ENCODE measurements at regions of chr14 and their contacts with region 1.

Region 1: DNA sequence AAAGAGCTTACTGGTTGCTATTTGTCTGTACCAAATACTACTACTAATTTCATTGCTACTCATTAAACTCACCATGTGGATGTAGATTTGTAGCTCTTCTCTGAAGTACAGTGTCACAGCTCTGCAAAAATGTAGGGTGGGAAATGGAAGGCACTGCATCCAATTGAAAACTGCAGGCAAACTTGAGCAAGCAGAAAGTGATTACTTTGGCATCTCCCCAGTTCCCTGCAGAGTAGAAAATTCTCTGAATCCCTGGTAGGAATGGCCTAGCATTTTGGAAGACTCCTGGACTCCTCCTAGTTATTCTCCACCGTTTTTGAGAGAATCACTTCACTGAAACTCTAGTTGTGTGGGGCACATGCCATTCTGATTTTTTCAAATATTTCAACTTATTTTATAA is 239.1 kb downstream of the DIO2 start:
- DNase-seq: no peak
- H3K4me3 Mint-ChIP-seq: no peak overlapping the region
- H3K27ac Mint-ChIP-seq: no peak overlapping the region
- H3K4me1 Mint-ChIP-seq: no peaks in the 10 kb centered on the region
- H3K27me3 Mint-ChIP-seq: no peaks in the 10 kb centered on the region

Region 2: DNA sequence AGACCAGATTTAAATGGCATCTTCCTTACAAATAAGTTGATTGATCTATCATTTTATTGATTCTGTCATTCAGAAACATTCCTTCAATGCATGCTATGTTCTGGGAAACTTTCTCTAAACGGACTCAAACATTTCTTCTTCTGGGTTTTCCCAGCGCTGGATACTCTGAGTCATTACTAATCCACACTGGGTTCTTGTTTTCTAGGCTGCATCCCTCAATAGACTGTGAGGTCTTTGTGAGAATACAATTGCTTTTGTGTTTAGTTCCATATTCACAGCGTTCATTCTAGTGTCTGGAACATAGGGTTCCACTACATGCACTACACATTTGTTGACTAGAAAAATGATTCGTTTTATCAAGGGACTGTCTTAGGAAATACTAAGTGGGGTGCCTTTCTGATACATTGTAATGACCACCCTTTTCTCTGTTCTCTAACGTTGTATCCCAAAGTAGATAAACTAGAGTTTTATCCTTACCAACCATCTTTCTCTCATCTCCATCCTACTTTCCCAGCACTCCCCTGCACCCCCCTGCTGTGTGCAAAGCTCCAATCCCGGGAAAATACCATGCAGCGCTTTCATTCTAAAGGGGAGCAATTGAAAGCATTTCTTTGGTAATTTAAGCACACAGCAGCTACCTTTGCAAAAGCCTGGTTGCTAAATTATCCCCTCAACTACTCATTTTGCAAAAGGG is 639.6 kb before region 1 on chr14:
- CTCF ChIA-PET with region 1: no interaction called
- POLR2A ChIA-PET with region 1: no interaction called
- DNase-seq: no peak
- H3K4me3 Mint-ChIP-seq: no peak overlapping the region
- H3K27ac Mint-ChIP-seq: no peak overlapping the region
- H3K4me1 Mint-ChIP-seq: no peaks in the 10 kb centered on the region
- H3K27me3 Mint-ChIP-seq: no peaks in the 10 kb centered on the region

Region 3: DNA sequence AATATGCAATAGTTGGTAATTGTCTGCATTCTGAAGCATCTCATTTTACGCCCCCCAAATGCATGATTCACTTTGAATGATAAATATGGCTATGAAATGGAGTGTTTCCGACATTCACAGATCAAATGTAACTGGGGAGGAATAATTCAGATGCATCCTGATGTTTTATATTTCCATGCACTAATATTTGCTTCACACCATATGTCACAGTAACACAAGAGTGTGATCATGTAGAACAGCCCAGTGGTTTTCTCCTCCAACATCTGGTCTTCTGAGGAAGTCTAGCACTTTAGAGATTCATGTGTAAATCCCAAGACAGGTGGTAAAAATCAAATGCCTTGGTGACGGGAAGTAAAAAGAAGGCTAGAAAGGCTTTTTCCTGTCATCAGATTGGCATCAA is 34.0 kb before region 1 on chr14:
- CTCF ChIA-PET with region 1: no interaction called
- POLR2A ChIA-PET with region 1: no interaction called
- DNase-seq: no peak
- H3K4me3 Mint-ChIP-seq: no peak overlapping the region
- H3K27ac Mint-ChIP-seq: no peak overlapping the region
- H3K4me1 Mint-ChIP-seq: no peaks in the 10 kb centered on the region
- H3K27me3 Mint-ChIP-seq: no peaks in the 10 kb centered on the region

Region 4: GRCh38 chr14:79960288-79960687 is 11.9 kb before region 1 on chr14:
- CTCF ChIA-PET with region 1: no interaction called
- POLR2A ChIA-PET with region 1: interaction called, 13 read pairs
- DNase-seq: no peak
- H3K4me3 Mint-ChIP-seq: no peak overlapping the region
- H3K27ac Mint-ChIP-seq: no peak overlapping the region
- H3K4me1 Mint-ChIP-seq: no peaks in the 10 kb centered on the region
- H3K27me3 Mint-ChIP-seq: no peaks in the 10 kb centered on the region

Region 5: DNA sequence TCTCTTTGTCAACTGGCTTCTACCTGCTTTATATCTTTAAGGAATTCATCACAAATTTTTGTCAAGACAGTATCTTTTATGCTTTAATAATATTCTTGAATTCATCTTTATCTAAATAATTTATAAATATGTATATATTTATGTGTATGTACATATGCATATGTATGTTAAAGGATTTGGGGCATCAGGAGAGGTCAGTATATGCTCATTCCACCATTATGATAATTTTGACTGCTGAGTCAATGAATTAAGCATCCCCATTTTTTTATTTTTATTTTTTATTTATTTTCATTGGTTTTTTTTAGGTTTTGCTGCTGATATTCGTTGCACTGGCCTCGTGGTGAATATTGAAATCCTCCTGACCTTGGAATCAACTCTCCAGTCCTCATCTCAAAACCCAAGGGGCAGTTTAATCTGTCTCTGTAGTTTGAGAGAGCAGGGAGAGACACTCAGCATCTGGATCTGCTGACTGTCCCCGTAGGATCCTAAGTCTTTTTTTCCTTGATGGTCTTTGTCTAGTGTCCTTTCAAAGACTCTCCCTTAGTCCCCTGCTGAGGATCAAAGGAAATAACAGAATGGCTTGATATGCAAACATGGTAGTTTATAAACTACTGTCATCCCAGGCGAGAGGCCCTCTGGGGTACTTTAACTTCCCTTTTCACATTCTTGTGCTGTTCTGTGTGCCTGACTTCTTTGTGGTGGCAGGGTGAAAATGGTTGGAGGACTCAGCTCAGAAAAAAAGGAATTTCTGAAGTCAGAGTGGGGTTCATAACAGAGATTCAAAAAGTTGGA is 20.4 kb after region 1 on chr14:
- CTCF ChIA-PET with region 1: no interaction called
- POLR2A ChIA-PET with region 1: no interaction called
- DNase-seq: no peak
- H3K4me3 Mint-ChIP-seq: no peak overlapping the region
- H3K27ac Mint-ChIP-seq: no peak overlapping the region
- H3K4me1 Mint-ChIP-seq: no peaks in the 10 kb centered on the region
- H3K27me3 Mint-ChIP-seq: no peaks in the 10 kb centered on the region